Caco-2 (cell line): ENCODE measurements at regions of chr19 and their contacts with region 1.

Region 1: DNA sequence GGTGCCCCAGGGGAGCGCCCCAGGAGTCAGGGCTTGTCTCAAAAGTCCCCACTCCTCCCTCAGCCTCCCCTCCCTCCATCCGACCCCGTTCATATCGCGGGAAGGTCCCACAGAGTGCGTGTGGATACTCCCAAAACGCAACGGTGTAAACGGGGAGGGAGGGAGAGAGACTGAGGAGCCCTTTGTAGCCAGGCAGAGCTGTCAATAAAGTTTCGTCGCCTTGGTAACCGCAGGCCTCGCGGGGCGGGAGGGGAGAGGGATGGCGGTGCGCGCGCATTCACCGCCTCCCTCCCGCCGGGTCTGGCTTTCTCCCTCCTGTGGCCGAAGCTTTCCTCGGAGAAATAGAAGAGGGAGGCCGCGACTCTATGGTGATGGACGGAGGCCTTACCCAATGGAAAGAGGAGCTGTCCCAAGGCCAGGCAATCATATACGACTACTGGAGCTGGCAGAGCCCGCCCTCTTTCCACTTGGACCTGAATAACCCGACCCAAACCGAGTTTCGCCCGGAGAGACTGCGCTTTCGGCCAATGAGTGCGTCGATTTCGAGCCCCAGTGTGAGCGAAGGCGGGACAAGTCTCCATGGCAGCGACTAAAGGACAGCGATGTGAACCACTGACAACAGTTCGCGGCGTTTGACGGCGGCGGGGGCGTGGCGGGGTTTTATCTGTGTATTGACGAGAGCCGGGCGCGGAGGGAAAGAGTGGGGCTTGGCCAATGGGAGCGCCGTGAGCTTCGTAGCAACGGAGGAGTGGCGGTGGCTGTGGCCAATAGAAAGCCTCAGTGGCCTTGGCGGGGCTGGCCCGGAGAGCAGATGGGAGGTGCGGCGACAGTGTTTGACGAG is at the start of gene KMT5C:
- DNase-seq: peak; percentile 100
- H3K4me3 ChIP-seq: peak within 1 kb of the TSS; percentile 67
- H3K4me3 Mint-ChIP-seq: peak within 1 kb of the TSS; percentile 91
- H3K27ac Mint-ChIP-seq: peak within 1 kb of the TSS; percentile 95
- H3K4me1 ChIP-seq: peaks cover 10% of the 10 kb centered on the region; the same call in 1 of the 2 replicates
- H3K4me1 Mint-ChIP-seq: peaks cover 14% of the 10 kb centered on the region
- H3K27me3 ChIP-seq: no peaks in the 10 kb centered on the region
- H3K27me3 Mint-ChIP-seq: no peaks in the 10 kb centered on the region
- CTCF ChIP-seq: peak in 1 of 2 experiments; percentile 43
- total RNA-seq, gene KMT5C: 25.8 and 26.3 TPM in 2 replicates

Region 2: DNA sequence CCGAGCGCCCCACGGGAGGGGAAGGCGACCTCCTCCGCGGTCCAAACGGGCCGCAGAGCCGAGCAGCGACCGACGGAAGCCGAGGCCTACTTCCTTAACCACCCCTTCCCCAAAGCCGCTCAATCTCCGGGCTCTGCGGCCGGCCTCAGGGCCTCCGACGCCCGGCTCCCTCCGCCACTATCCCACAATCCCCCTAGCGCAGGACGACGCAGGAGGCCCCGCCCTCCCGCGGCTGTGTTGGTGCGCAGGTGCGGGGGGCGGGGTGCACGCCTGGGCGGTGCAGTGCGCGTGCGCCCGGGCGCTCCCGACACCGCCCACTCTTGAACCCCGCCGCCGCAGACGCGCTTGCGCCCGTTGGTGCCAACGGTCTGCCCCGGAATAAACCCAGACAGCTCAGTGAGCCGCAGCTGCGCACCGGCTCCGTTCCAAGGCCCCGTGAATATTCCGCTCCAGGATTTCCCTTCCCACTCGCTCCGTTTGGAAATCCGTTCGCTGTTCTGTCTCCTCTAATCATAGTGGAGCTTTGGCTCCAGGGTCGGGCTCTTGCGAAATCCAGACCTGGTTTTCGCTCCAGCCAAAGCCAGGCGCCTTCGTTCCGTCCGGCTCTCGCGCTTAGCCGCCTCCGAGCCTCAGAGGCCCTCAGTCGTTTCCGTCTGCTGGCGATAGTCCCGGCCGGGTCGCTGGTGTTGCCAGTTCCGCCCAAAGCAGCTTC is 80.3 kb before region 1 on chr19 and contains the start of gene PPP6R1:
- CTCF ChIA-PET with region 1: interaction called, 3 read pairs
- POLR2A ChIA-PET with region 1: interaction called, 8 read pairs
- intact Hi-C with region 1: loop called (anchors 1 kb)
- DNase-seq: peak; percentile 98 to 99
- H3K4me3 ChIP-seq: peak within 1 kb of the TSS; percentile 85
- H3K4me3 Mint-ChIP-seq: peak within 1 kb of the TSS; percentile 94
- H3K27ac Mint-ChIP-seq: peak within 1 kb of the TSS; percentile 81
- H3K4me1 ChIP-seq: peaks cover 23% of the 10 kb centered on the region; the same call in 1 of the 2 replicates
- H3K4me1 Mint-ChIP-seq: peaks cover 23% of the 10 kb centered on the region
- H3K27me3 ChIP-seq: no peaks in the 10 kb centered on the region
- H3K27me3 Mint-ChIP-seq: no peaks in the 10 kb centered on the region
- CTCF ChIP-seq: no peak
- total RNA-seq, gene PPP6R1: 113 and 118 TPM in 2 replicates

Region 3: GRCh38 chr19:55289117-55289796 is 50.0 kb before region 1 on chr19:
- CTCF ChIA-PET with region 1: interaction called, 15 read pairs
- POLR2A ChIA-PET with region 1: interaction called, 8 read pairs
- intact Hi-C with region 1: loop called (anchors 2 kb)
- DNase-seq: no peak
- H3K4me3 ChIP-seq: no peak overlapping the region
- H3K4me3 Mint-ChIP-seq: no peak overlapping the region
- H3K27ac Mint-ChIP-seq: no peak overlapping the region
- H3K4me1 ChIP-seq: peaks cover 10% of the 10 kb centered on the region
- H3K4me1 Mint-ChIP-seq: peaks cover 8% of the 10 kb centered on the region
- H3K27me3 ChIP-seq: no peaks in the 10 kb centered on the region
- H3K27me3 Mint-ChIP-seq: no peaks in the 10 kb centered on the region
- CTCF ChIP-seq: no peak

Region 4: DNA sequence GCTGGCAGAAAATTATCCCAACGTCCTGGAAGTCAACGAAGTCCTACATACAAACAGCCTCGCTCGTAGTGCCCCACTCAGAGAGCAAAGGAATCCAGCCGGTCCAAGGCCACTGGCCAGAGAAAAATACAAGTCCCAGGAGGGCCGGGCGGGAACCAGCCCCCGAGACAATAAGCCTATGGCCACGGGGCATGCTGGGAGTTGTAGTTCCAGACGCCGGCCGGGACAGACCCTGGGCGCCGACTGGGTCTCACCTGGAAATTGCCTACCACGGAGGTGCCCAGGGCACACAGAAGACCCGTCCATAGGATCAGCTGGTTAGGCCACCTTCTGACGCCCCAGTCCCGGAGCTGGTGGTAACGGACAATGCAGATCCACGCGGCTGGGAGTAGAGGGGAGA is 19.5 kb before region 1 on chr19:
- CTCF ChIA-PET with region 1: interaction called, 20 read pairs
- POLR2A ChIA-PET with region 1: interaction called, 15 read pairs
- intact Hi-C with region 1: no loop called
- DNase-seq: peak; percentile 47 to 58
- H3K4me3 ChIP-seq: no peak overlapping the region
- H3K4me3 Mint-ChIP-seq: no peak overlapping the region
- H3K27ac Mint-ChIP-seq: no peak overlapping the region
- H3K4me1 ChIP-seq: peaks cover 25% of the 10 kb centered on the region
- H3K4me1 Mint-ChIP-seq: peaks cover 23% of the 10 kb centered on the region
- H3K27me3 ChIP-seq: no peaks in the 10 kb centered on the region
- H3K27me3 Mint-ChIP-seq: no peaks in the 10 kb centered on the region
- CTCF ChIP-seq: no peak

Region 5: GRCh38 chr19:55353803-55354697 is 14.8 kb after region 1 on chr19:
- CTCF ChIA-PET with region 1: interaction called, 4 read pairs
- POLR2A ChIA-PET with region 1: interaction called, 23 read pairs
- intact Hi-C with region 1: loop called (anchors 1 kb)
- DNase-seq: peak; percentile 74 to 82
- H3K4me3 ChIP-seq: peak overlapping the region; percentile 64
- H3K4me3 Mint-ChIP-seq: peak overlapping the region; percentile 80
- H3K27ac Mint-ChIP-seq: no peak overlapping the region
- H3K4me1 ChIP-seq: peaks cover 19% of the 10 kb centered on the region
- H3K4me1 Mint-ChIP-seq: peaks cover 9% of the 10 kb centered on the region
- H3K27me3 ChIP-seq: peaks cover 5% of the 10 kb centered on the region
- H3K27me3 Mint-ChIP-seq: peaks cover 15% of the 10 kb centered on the region
- CTCF ChIP-seq: no peak

Region 6: DNA sequence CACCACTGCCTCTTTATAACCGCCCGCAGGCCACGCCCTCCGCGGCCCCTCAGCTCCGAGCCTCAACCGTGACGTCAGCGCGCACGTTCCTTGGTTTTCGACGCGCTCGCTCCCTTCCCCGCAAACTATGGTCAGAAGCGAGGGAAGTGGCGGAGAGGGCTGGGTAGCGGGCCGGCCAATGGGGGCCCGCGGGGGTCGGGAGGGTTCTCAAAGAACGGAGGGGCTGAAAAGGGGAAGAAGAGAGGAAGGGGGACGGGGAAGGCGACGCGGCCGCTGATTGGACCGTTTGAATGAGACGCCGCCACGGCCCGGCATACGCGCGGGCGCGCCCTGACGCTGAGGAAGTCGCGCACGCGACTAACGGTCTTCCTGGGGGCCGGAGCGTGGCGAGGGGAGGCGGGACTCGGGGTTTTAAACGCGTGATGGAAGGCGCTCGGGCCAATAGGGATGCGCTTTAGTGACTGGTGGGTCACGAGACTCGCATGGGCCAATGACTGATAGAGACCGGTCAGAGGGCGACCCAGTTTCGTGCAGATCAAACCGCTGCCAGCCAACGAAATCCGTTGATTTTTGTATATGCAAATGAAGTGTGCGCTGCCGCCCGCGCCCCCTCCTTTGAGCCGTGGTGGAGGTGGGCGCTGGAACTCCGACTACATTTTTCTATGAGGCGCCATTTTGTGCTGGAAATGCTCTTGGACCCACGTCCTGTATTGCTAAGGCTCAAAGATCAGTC is 68.7 kb after region 1 on chr19:
- CTCF ChIA-PET with region 1: interaction called, 3 read pairs
- POLR2A ChIA-PET with region 1: interaction called, 24 read pairs
- intact Hi-C with region 1: no loop called
- DNase-seq: peak; percentile 99
- H3K4me3 ChIP-seq: peak overlapping the region; percentile 94
- H3K4me3 Mint-ChIP-seq: peak overlapping the region; percentile 93
- H3K27ac Mint-ChIP-seq: peak overlapping the region; percentile 99
- H3K4me1 ChIP-seq: peaks cover 18% of the 10 kb centered on the region
- H3K4me1 Mint-ChIP-seq: peaks cover 14% of the 10 kb centered on the region
- H3K27me3 ChIP-seq: no peaks in the 10 kb centered on the region
- H3K27me3 Mint-ChIP-seq: peaks cover 6% of the 10 kb centered on the region
- CTCF ChIP-seq: no peak